ENCODE measurements at regions of chr16 and their contacts with region 1.

Region 1: GRCh38 chr16:66740010-66740409 is 11.4 kb downstream of the DYNC1LI2 start:
- DNase-seq: peak in 20 of 35 experiments; percentile 9 to 64 (median 24)
- ATAC-seq: peak in 2 of 4 experiments; percentile 33 to 58
- H3K4me3 ChIP-seq: no peak overlapping the region
- H3K4me3 Mint-ChIP-seq: no peak overlapping the region
- H3K27ac ChIP-seq: no peak overlapping the region
- H3K27ac Mint-ChIP-seq: peak overlapping the region in 1 of 2 donors; percentile 51
- H3K4me1 ChIP-seq: peaks cover 0 to 12% of the 10 kb centered on the region in 2 experiments
- H3K4me1 Mint-ChIP-seq: peaks cover 8 to 26% (median 22%) of the 10 kb centered on the region in 3 donors
- H3K27me3 ChIP-seq: no peaks in the 10 kb centered on the region
- H3K27me3 Mint-ChIP-seq: no peaks in the 10 kb centered on the region

Region 2: DNA sequence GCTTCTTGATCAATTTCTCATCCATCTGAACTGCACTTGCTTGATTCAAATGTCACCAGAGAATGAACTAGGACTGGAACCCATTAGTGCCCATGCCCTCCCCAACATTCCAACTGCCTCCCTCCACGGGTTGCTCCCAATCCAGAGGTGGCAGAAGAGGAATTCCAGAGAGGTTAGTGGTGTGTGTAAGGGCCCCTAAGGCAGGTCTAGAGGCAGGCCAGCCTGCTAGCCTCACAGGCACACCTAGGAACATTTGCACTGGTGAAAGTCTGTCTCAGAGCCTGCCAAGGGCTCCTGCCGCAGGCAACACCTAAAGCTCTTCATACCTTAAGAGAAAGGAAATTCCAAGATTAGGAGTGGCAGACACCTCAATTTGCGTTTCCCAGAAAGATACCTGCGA is 22.2 kb before region 1 on chr16:
- CTCF ChIA-PET with region 1: no interaction called
- POLR2A ChIA-PET with region 1: no interaction called
- DNase-seq: no peak
- ATAC-seq: no peak
- H3K4me3 ChIP-seq: no peak overlapping the region
- H3K4me3 Mint-ChIP-seq: no peak overlapping the region
- H3K27ac ChIP-seq: no peak overlapping the region
- H3K27ac Mint-ChIP-seq: no peak overlapping the region
- H3K4me1 ChIP-seq: no peaks in the 10 kb centered on the region
- H3K4me1 Mint-ChIP-seq: no peaks in the 10 kb centered on the region
- H3K27me3 ChIP-seq: no peaks in the 10 kb centered on the region
- H3K27me3 Mint-ChIP-seq: no peaks in the 10 kb centered on the region

Region 3: GRCh38 chr16:66728117-66728787 is 11.8 kb before region 1 on chr16:
- CTCF ChIA-PET with region 1: interaction called, 4 to 19 read pairs
- POLR2A ChIA-PET with region 1: interaction called in 1 of 2 experiments, 5 read pairs
- DNase-seq: peak in 2 of 35 experiments; percentile 15 to 58
- ATAC-seq: peak; percentile 65 to 76 (median 68)
- H3K4me3 ChIP-seq: no peak overlapping the region
- H3K4me3 Mint-ChIP-seq: no peak overlapping the region
- H3K27ac ChIP-seq: no peak overlapping the region
- H3K27ac Mint-ChIP-seq: peak overlapping the region in 1 of 2 donors; percentile 82
- H3K4me1 ChIP-seq: no peaks in the 10 kb centered on the region
- H3K4me1 Mint-ChIP-seq: peaks cover 1 to 11% (median 3%) of the 10 kb centered on the region in 3 donors
- H3K27me3 ChIP-seq: no peaks in the 10 kb centered on the region
- H3K27me3 Mint-ChIP-seq: no peaks in the 10 kb centered on the region

Measured in T-cell (primary cell).